Activated T-helper 1 cell treated with anti-CD3 and anti-CD28 coated beads, Interleukin-12 subunit alpha, Interleukin-12 subunit beta, Interleukin-2, Interleukin-4 antibody, amounts not matched to agents 30 ng/mL and 10 ng/mL and 1 ng/mL, durations not matched to agents 14 hours and 24 hours and 36 hours (primary cell): ENCODE measurements at regions of chr10 and their contacts with region 1.

Region 1: GRCh38 chr10:50508315-50509051 is 115.3 kb downstream of the SGMS1 start:
- DNase-seq: peak; percentile 37
- H3K4me3 Mint-ChIP-seq: no peak overlapping the region
- H3K27ac Mint-ChIP-seq: no peak overlapping the region
- H3K4me1 Mint-ChIP-seq: peaks cover 79% of the 10 kb centered on the region
- H3K27me3 Mint-ChIP-seq: no peaks in the 10 kb centered on the region

Region 2: GRCh38 chr10:50260791-50261281 is 247.6 kb before region 1 on chr10:
- intact Hi-C with region 1: loop called (anchors 2 kb)
- DNase-seq: no peak
- H3K4me3 Mint-ChIP-seq: no peak overlapping the region
- H3K27ac Mint-ChIP-seq: peak overlapping the region; percentile 23
- H3K4me1 Mint-ChIP-seq: peaks cover 20% of the 10 kb centered on the region
- H3K27me3 Mint-ChIP-seq: peaks cover 27% of the 10 kb centered on the region

Region 3: DNA sequence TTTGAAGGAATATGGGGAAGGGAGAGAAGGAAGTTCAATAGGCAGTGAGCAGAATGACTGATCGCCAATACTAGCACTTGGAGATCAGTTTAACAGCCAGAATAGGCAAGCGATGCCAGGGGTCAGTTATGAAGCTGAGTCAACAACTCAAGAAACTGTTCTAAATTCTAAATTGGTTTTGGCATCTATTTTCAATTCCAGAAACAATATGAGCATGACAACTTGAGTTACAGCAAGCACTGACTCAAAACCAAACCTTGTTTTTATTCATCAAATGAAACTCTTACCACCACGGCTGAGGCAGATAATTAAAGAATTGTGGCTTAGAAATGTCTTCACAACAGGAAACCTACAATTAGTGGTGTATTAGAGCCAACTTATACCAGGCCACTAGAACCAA is 76.7 kb before region 1 on chr10:
- intact Hi-C with region 1: loop called (anchors 1 kb)
- DNase-seq: no peak
- H3K4me3 Mint-ChIP-seq: peak overlapping the region; percentile 37
- H3K27ac Mint-ChIP-seq: peak overlapping the region; percentile 67
- H3K4me1 Mint-ChIP-seq: peaks cover 35% of the 10 kb centered on the region
- H3K27me3 Mint-ChIP-seq: no peaks in the 10 kb centered on the region

Region 4: DNA sequence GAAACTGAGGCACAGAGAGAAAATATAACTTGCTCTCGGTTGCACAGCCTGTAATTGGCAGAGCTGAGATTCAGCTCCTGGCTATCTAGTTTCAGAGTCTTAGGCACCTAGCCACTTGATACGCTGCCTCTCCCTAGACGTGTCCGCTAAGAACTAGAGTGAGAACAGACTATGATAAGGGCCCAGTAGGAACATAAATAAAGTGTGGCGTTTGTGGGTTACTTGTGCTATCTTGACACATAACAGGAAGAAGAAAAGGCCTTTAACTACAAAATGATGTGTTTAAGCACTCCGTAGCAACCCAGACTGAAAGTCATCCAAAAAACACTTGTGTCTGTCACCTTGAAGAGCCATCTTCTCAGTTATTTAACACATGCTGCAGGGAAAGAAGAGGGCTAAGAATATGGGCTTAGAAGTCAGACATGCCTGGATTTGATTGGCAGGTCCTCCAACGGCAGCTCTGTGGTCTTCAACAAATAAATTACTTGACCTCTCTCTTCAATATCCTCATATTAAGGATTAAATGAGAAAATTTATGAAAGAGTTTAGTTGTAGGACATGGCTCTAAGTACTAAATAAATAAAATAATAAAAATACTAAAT is 19.1 kb after region 1 on chr10:
- intact Hi-C with region 1: loop called (anchors 1 kb)
- DNase-seq: no peak
- H3K4me3 Mint-ChIP-seq: no peak overlapping the region
- H3K27ac Mint-ChIP-seq: no peak overlapping the region
- H3K4me1 Mint-ChIP-seq: peaks cover 25% of the 10 kb centered on the region
- H3K27me3 Mint-ChIP-seq: no peaks in the 10 kb centered on the region

Region 5: GRCh38 chr10:50636618-50637579 is 128.4 kb after region 1 on chr10:
- intact Hi-C with region 1: loop called (anchors 1 kb)
- DNase-seq: peak; percentile 40
- H3K4me3 Mint-ChIP-seq: peak overlapping the region; percentile 41
- H3K27ac Mint-ChIP-seq: peak overlapping the region; percentile 1
- H3K4me1 Mint-ChIP-seq: peaks cover 43% of the 10 kb centered on the region
- H3K27me3 Mint-ChIP-seq: peaks cover 29% of the 10 kb centered on the region

Region 6: GRCh38 chr10:52011118-52011517 is 1502.6 kb after region 1 on chr10:
- intact Hi-C with region 1: no loop called
- DNase-seq: no peak
- H3K4me3 Mint-ChIP-seq: no peak overlapping the region
- H3K27ac Mint-ChIP-seq: no peak overlapping the region
- H3K4me1 Mint-ChIP-seq: no peaks in the 10 kb centered on the region
- H3K27me3 Mint-ChIP-seq: no peaks in the 10 kb centered on the region